K562 (cell line): ENCODE measurements at regions of chr2 and their contacts with region 1.

Region 1: GRCh38 chr2:185862657-185863398 is 124.2 kb downstream of the FSIP2 start:
- DNase-seq: peak in 1 of 4 experiments; percentile 18
- ATAC-seq: peak; percentile 85
- H3K4me3 ChIP-seq: peak overlapping the region; percentile 25
- H3K27ac ChIP-seq: peak overlapping the region; percentile 59; the same call in 2 of the 3 replicates
- H3K4me1 ChIP-seq: no peaks in the 10 kb centered on the region
- H3K27me3 ChIP-seq: no peaks in the 10 kb centered on the region
- CTCF ChIP-seq: no peak
- EP300 ChIP-seq: no peak
- POLR2A ChIP-seq: no peak
- RAD21 ChIP-seq: no peak

Region 2: DNA sequence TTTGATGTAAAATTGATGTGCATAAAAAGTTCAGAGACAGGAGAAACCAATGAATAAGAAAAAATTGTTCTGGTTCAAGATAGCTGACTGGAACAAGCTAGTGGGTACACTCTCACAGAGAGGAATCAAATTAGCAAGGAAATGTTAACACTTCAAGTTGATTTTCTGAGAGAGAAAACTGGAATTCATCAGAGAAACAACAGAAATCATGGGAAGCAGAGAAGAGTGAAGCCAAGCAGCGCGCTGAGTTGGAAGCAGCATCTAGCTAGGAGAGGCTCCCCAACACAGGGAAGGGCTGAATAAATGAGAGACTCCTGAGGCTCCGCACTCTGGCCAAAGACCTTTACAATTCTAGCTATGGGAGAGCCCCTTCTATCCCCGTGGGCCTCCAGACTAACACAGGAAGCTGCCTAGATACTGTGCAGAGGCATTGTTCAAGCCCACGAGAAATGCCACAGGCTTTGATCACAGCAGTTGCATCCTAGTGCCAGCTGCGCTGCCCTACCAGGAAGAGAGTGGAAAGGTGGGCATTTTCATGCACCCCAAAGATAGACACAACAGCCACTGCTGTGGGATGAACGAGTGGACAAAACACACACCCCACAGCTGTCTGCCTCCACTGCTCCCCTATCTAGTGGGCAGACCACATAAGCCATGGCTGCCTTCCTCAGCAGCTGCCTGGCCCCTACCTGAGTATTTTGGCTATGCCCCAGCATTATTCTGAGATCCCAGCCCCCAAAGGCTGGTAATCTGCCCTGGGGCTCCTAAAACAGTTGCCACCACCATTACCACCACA is 12.5 kb after region 1 on chr2:
- CTCF ChIA-PET with region 1: no interaction called
- POLR2A ChIA-PET with region 1: no interaction called
- in situ Hi-C with region 1: no loop called
- intact Hi-C with region 1: no loop called
- DNase-seq: no peak
- ATAC-seq: no peak
- H3K4me3 ChIP-seq: no peak overlapping the region
- H3K27ac ChIP-seq: no peak overlapping the region
- H3K4me1 ChIP-seq: no peaks in the 10 kb centered on the region
- H3K27me3 ChIP-seq: no peaks in the 10 kb centered on the region
- CTCF ChIP-seq: no peak
- EP300 ChIP-seq: no peak
- POLR2A ChIP-seq: no peak
- RAD21 ChIP-seq: no peak

Region 3: GRCh38 chr2:185919155-185919554 is 56.3 kb after region 1 on chr2:
- CTCF ChIA-PET with region 1: no interaction called
- POLR2A ChIA-PET with region 1: no interaction called
- in situ Hi-C with region 1: no loop called
- intact Hi-C with region 1: no loop called
- DNase-seq: no peak
- ATAC-seq: no peak
- H3K4me3 ChIP-seq: no peak overlapping the region
- H3K27ac ChIP-seq: no peak overlapping the region
- H3K4me1 ChIP-seq: no peaks in the 10 kb centered on the region
- H3K27me3 ChIP-seq: no peaks in the 10 kb centered on the region
- CTCF ChIP-seq: no peak
- EP300 ChIP-seq: no peak
- POLR2A ChIP-seq: no peak
- RAD21 ChIP-seq: no peak

Region 4: GRCh38 chr2:186485871-186486650 is 623.2 kb after region 1 on chr2 and contains the start of gene ZC3H15:
- CTCF ChIA-PET with region 1: no interaction called
- POLR2A ChIA-PET with region 1: no interaction called
- in situ Hi-C with region 1: no loop called
- intact Hi-C with region 1: loop called (anchors 10 kb)
- DNase-seq: peak; percentile 98 to 99 (median 98)
- ATAC-seq: peak; percentile 86
- H3K4me3 ChIP-seq: peak within 1 kb of the TSS; percentile 75
- H3K27ac ChIP-seq: peak within 1 kb of the TSS; percentile 90
- H3K4me1 ChIP-seq: peaks cover 2 to 28% of the 10 kb centered on the region in 2 experiments; a peak in 3 of 5 replicates
- H3K27me3 ChIP-seq: no peaks in the 10 kb centered on the region
- CTCF ChIP-seq: peak in 1 of 3 experiments; percentile 4; a peak in 1 of 6 replicates
- EP300 ChIP-seq: peak; percentile 48; the same call in 1 of the 2 replicates
- POLR2A ChIP-seq: peak; percentile 98
- RAD21 ChIP-seq: no peak
- polyA plus RNA-seq, gene ZC3H15: 182 to 186 TPM